H1 (cell line): ENCODE measurements at regions of chr14 and their contacts with region 1.

Region 1: GRCh38 chr14:93536945-93537344 is 106.2 kb downstream of the UNC79 start:
- DNase-seq: peak in 1 of 2 experiments; percentile 51
- H3K4me3 ChIP-seq: no peak overlapping the region
- H3K27ac ChIP-seq: no peak overlapping the region
- H3K4me1 ChIP-seq: no peaks in the 10 kb centered on the region
- H3K27me3 ChIP-seq: no peaks in the 10 kb centered on the region
- CTCF ChIP-seq: peak in 2 of 3 experiments; percentile 57 to 60; a peak in 3 of 4 replicates
- EP300 ChIP-seq: no peak
- POLR2A ChIP-seq: no peak
- RAD21 ChIP-seq: peak; percentile 81 to 86

Region 2: DNA sequence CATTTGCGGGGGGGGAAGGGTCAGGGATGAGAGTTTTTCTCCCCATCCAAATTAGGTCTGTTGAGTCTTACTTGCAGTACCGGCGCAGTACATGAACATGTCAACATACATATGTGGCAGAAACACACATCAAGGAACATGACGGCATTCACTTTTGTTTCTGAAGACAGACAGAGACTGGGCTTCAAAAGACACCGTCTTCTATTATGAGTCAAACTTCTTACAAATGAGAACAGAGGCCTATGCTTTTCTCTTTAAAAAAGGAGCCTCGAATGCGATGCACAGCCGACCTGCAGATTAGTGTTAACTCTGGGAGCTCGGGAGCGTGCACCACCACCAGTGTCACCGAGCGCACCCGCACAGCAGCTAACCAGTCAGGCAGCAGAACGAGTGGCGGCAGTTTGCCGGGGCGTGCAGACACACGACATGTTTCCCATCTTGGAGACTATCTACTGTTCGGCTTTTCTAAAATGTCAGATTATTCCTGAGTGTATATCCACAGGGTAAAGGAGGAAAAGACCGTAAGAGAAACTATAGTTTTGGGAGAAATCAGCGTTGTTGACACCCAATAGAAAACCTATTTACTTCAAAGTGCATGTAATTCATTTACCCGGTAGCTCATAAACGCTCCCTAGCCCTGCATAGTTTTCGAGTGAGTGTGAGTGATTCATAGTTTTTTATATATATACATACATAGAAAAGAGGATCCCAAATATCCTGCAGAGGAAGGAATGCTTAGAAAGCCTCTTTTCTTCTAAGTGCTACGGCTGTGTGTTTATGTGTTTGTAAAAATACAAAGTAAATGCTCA is 296.9 kb before region 1 on chr14:
- CTCF ChIA-PET with region 1: interaction called, 12 read pairs
- POLR2A ChIA-PET with region 1: no interaction called
- DNase-seq: no peak
- H3K4me3 ChIP-seq: no peak overlapping the region
- H3K27ac ChIP-seq: no peak overlapping the region
- H3K4me1 ChIP-seq: no peaks in the 10 kb centered on the region
- H3K27me3 ChIP-seq: no peaks in the 10 kb centered on the region
- CTCF ChIP-seq: no peak
- EP300 ChIP-seq: no peak
- POLR2A ChIP-seq: no peak
- RAD21 ChIP-seq: no peak

Region 3: GRCh38 chr14:93548102-93548843 is 11.3 kb after region 1 on chr14:
- CTCF ChIA-PET with region 1: interaction called, 15 read pairs
- POLR2A ChIA-PET with region 1: no interaction called
- DNase-seq: no peak
- H3K4me3 ChIP-seq: no peak overlapping the region
- H3K27ac ChIP-seq: no peak overlapping the region
- H3K4me1 ChIP-seq: no peaks in the 10 kb centered on the region
- H3K27me3 ChIP-seq: no peaks in the 10 kb centered on the region
- CTCF ChIP-seq: no peak
- EP300 ChIP-seq: no peak
- POLR2A ChIP-seq: no peak
- RAD21 ChIP-seq: no peak

Region 4: DNA sequence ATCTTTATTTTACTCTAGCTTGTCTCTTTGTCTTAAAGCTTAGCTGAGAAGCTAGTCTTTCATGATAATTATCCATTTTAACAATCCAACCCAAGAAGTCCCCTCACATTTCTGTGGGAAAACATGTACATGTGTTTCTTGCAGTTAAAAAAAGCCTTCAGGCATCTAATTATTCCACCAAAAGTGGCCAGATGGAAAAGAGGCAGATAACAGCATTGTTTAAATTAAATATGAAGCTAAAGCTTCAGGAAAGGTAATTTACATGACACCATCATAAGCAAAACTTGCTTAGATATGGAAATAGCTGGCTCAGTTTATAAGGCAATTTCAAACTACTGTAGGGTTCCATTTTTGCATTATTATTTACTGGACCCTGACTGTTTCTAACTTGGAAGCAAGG is 69.1 kb after region 1 on chr14:
- CTCF ChIA-PET with region 1: no interaction called
- POLR2A ChIA-PET with region 1: no interaction called
- DNase-seq: no peak
- H3K4me3 ChIP-seq: no peak overlapping the region
- H3K27ac ChIP-seq: no peak overlapping the region
- H3K4me1 ChIP-seq: no peaks in the 10 kb centered on the region
- H3K27me3 ChIP-seq: no peaks in the 10 kb centered on the region
- CTCF ChIP-seq: no peak
- EP300 ChIP-seq: no peak
- POLR2A ChIP-seq: no peak
- RAD21 ChIP-seq: no peak